ENCODE measurements at regions of chr5 and their contacts with region 1.

Region 1: DNA sequence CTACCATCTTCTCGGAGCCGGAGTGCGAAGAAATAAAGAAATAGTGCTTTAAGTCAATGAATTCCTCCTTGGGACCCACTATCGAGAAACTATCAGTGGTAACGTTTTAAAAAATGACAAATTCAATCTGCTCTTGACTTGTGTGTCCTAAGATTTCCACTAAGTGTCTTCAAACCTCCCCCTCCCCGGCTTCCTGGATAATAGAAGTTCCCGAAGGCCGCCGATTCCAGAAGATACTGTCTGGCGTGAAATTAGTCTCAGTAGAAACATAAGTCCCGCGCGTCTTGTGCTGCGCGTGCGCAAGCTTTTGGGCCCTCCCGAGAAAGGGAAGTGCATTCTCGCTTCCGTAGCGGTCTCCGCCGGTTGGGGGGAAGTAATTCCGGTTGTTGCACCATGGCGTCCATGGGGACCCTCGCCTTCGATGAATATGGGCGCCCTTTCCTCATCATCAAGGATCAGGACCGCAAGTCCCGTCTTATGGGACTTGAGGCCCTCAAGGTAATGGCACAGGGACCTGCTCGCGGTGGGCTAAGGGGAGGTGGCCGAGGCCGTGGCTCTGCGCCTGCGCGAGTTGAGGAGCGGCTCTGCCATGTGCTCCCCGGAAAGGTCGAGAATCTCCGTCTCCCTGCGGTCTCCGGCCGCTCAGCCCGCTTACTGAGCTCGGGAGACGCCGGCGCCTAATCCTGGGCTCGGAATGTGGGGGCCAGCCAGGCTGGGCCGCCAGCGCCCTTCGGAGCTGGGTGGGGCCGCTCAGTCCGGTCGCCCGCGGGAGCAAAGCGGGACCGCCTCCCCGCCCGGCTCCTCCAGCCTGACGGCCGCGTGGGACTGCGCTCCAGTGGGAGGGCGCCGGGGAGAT is at the start of gene CCT5:
- DNase-seq: peak; percentile 82 to 96 (median 95)
- H3K4me3 ChIP-seq: peak within 1 kb of the TSS; percentile 100
- H3K4me3 Mint-ChIP-seq: peak within 1 kb of the TSS; percentile 88 to 99 (median 95)
- H3K27ac ChIP-seq: peak within 1 kb of the TSS; percentile 96
- H3K27ac Mint-ChIP-seq: peak within 1 kb of the TSS; percentile 96 to 100 (median 99)
- H3K4me1 ChIP-seq: peaks cover 31% of the 10 kb centered on the region
- H3K4me1 Mint-ChIP-seq: peaks cover 42 to 69% (median 66%) of the 10 kb centered on the region in 3 donors
- H3K27me3 ChIP-seq: no peaks in the 10 kb centered on the region
- H3K27me3 Mint-ChIP-seq: peaks cover 0 to 6% of the 10 kb centered on the region in 2 donors
- total RNA-seq, gene CCT5: 532 to 537 TPM

Region 2: DNA sequence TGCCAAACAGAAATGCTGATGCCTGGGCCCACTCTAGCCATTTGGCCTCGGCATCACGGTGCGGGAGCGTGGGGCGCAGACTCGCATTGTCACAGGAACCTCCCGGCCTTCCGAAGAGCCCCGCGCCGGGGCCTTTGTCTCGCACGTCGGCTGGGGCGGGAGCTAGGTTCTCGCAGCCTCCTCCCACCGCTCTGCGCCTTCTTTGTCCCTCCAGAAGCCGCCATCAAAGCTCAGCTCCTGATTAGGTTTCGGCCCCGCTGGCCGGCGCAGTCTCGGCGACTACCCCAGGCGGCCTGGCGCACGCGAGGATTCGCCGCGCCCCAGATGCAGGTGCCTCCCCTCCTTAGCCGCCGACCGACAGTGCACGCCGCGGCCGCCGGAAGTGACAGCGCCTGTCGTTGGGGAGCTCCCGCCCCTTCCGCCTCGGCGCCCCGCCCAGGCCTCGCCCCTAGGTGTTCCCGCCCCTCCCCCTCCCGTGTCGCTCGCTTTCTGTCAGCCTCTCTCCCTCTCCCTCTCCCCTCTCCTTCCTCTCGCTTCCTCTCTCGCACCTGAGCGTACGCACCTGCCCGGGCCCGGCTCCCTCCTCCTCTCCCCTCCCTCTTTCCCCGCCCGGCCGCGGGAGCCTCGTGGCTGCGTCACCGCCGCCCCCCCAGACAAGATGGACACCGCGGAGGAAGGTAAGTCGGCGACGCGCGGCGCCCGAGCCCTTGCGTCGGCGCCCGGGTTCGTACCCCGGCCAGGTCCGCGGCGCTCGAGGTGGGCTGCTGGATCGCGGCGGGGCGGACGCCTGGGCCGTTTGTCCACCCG is 103.3 kb after region 1 on chr5 and contains the start of gene MARCHF6:
- CTCF ChIA-PET with region 1: interaction called, 4 read pairs
- POLR2A ChIA-PET with region 1: interaction called, 17 read pairs
- DNase-seq: peak; percentile 93 to 97 (median 94)
- H3K4me3 ChIP-seq: peak within 1 kb of the TSS; percentile 94
- H3K4me3 Mint-ChIP-seq: peak within 1 kb of the TSS; percentile 97 to 100 (median 99)
- H3K27ac ChIP-seq: peak within 1 kb of the TSS; percentile 91
- H3K27ac Mint-ChIP-seq: peak within 1 kb of the TSS; percentile 97 to 100 (median 99)
- H3K4me1 ChIP-seq: peaks cover 27% of the 10 kb centered on the region
- H3K4me1 Mint-ChIP-seq: peaks cover 39 to 53% (median 51%) of the 10 kb centered on the region in 3 donors
- H3K27me3 ChIP-seq: no peaks in the 10 kb centered on the region
- H3K27me3 Mint-ChIP-seq: no peaks in the 10 kb centered on the region
- total RNA-seq, gene MARCHF6: 103 to 110 TPM

Measured in CD8-positive, alpha-beta memory T cell (primary cell).